OCI-LY7 (cell line): ENCODE measurements at regions of chr19 and their contacts with region 1.

Region 1: GRCh38 chr19:3830621-3831589 is 37.9 kb downstream of the ZFR2 start:
- DNase-seq: no peak
- H3K4me3 ChIP-seq: no peak overlapping the region
- H3K27ac ChIP-seq: no peak overlapping the region
- H3K4me1 ChIP-seq: no peaks in the 10 kb centered on the region
- CTCF ChIP-seq: no peak

Region 2: GRCh38 chr19:3665681-3666544 is 165.0 kb before region 1 on chr19:
- CTCF ChIA-PET with region 1: no interaction called
- POLR2A ChIA-PET with region 1: no interaction called
- intact Hi-C with region 1: no loop called
- DNase-seq: peak; percentile 55
- H3K4me3 ChIP-seq: peak overlapping the region; percentile 58
- H3K27ac ChIP-seq: peak overlapping the region; percentile 68
- H3K4me1 ChIP-seq: peaks cover 25% of the 10 kb centered on the region
- CTCF ChIP-seq: peak; percentile 88

Region 3: GRCh38 chr19:3774621-3775373 is 56.1 kb before region 1 on chr19:
- CTCF ChIA-PET with region 1: interaction called, 11 read pairs
- POLR2A ChIA-PET with region 1: no interaction called
- intact Hi-C with region 1: no loop called
- DNase-seq: no peak
- H3K4me3 ChIP-seq: no peak overlapping the region
- H3K27ac ChIP-seq: no peak overlapping the region
- H3K4me1 ChIP-seq: no peaks in the 10 kb centered on the region
- CTCF ChIP-seq: no peak